Common myeloid progenitor, CD34-positive (primary cell): ENCODE measurements at regions of chr3 and their contacts with region 1.

Region 1: GRCh38 chr3:47362701-47363100 is 18.1 kb upstream of the PTPN23 start:
- DNase-seq: peak; percentile 29 to 43 (median 36)
- H3K4me3 ChIP-seq: no peak overlapping the region
- H3K27ac ChIP-seq: no peak overlapping the region
- H3K4me1 ChIP-seq: peaks cover 0 to 7% (median 5%) of the 10 kb centered on the region in 4 experiments
- H3K27me3 ChIP-seq: no peaks in the 10 kb centered on the region

Region 2: DNA sequence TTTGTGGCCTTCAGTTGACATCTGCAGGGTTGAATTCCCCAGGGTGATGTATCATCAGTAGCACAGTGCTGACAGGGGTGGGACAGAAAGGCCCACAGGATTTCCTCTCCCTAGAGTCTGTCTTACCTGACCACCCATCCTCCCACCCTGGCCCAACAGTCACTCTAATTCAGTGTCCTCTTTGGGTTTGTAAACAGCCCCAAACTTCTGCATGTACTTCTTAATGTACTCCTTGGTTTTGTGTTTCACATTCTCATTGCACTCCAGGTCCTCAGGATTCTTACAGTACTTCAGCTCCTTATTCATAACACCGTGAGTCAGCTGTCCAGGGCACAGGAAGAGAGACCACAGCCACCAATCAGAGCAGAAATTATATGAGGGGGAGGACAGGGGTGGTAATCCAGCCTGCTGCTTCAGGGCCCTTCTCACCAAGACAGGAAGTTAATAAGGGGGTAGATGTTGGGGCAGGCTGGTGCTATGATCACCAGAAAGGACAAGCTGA is 345.7 kb before region 1 on chr3:
- CTCF ChIA-PET with region 1: no interaction called
- POLR2A ChIA-PET with region 1: interaction called, 10 read pairs
- DNase-seq: peak; percentile 73 to 95 (median 94)
- H3K4me3 ChIP-seq: peak overlapping the region in 4 of 7 experiments; percentile 34 to 56 (median 39)
- H3K27ac ChIP-seq: peak overlapping the region; percentile 34 to 65
- H3K4me1 ChIP-seq: peaks cover 35 to 62% (median 46%) of the 10 kb centered on the region in 4 experiments
- H3K27me3 ChIP-seq: no peaks in the 10 kb centered on the region

Region 3: GRCh38 chr3:47057212-47057671 is 305.5 kb before region 1 on chr3:
- CTCF ChIA-PET with region 1: no interaction called
- POLR2A ChIA-PET with region 1: no interaction called
- DNase-seq: peak in 1 of 3 donors; percentile 8
- H3K4me3 ChIP-seq: no peak overlapping the region
- H3K27ac ChIP-seq: no peak overlapping the region
- H3K4me1 ChIP-seq: no peaks in the 10 kb centered on the region
- H3K27me3 ChIP-seq: no peaks in the 10 kb centered on the region

Region 4: GRCh38 chr3:48240711-48241491 is 878.2 kb after region 1 on chr3 and contains the start of gene ZNF589:
- CTCF ChIA-PET with region 1: no interaction called
- POLR2A ChIA-PET with region 1: no interaction called
- DNase-seq: peak; percentile 96 to 99 (median 98)
- H3K4me3 ChIP-seq: peak within 1 kb of the TSS; percentile 58 to 99 (median 92)
- H3K27ac ChIP-seq: peak within 1 kb of the TSS; percentile 33 to 77
- H3K4me1 ChIP-seq: peaks cover 2 to 49% (median 14%) of the 10 kb centered on the region in 4 experiments
- H3K27me3 ChIP-seq: no peaks in the 10 kb centered on the region